IMR-90 (cell line): ENCODE measurements at regions of chr15 and their contacts with region 1.

Region 1: GRCh38 chr15:29917600-29918597 is 95.6 kb upstream of the TJP1 start:
- DNase-seq: peak; percentile 85
- ATAC-seq: peak; percentile 80
- H3K4me3 ChIP-seq: no peak overlapping the region
- H3K27ac ChIP-seq: peak overlapping the region; percentile 34; the same call in 1 of the 2 replicates
- H3K4me1 ChIP-seq: peaks cover 20% of the 10 kb centered on the region
- H3K27me3 ChIP-seq: peaks cover 3% of the 10 kb centered on the region; the same call in 1 of the 2 replicates
- CTCF ChIP-seq: no peak
- POLR2A ChIP-seq: no peak
- RAD21 ChIP-seq: no peak

Region 2: DNA sequence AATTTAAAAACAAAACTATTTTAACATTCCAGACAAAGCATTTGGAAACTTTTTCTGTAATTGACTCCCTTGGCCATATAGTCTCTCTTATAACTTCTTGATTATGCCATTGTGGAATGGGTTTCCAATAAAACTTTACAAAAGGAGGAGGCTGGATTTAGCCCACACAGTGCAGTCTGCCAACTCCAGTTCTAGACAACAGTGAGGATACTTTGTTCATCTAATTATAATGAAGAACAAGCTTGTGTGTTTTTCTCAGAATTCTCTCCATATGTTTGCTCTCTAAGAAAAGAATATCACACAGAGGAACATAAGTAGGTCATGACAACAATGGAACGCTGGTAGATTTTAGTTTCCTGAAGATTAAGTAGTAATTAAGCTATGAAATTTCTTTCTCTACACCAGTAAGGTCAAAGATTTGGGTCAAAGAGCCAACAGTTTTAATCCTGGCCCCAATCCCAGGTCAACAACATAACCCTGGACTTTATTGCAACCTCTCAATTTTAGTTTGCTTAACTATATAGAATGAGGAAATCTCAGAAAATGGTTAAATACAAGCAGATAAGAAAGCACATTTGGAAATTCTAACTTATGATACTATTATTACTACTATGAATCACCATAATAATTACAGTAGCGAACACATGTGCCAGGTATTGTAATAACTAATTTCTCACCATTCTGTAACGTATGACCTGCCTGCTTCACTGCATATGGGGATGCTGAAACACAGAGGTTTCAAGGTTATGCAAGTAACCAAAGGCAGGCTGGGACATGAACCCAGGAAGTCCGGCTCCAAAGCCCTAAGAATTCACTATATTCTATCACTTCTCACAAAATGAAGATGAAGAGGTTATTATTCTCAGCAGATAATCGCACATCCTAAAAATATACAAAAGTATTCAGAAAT is 161.3 kb before region 1 on chr15:
- CTCF ChIA-PET with region 1: no interaction called
- POLR2A ChIA-PET with region 1: no interaction called
- dilution Hi-C with region 1: no loop called
- in situ Hi-C with region 1: no loop called
- intact Hi-C with region 1: no loop called
- DNase-seq: no peak
- ATAC-seq: no peak
- H3K4me3 ChIP-seq: no peak overlapping the region
- H3K27ac ChIP-seq: no peak overlapping the region
- H3K4me1 ChIP-seq: 0 out of 2 replicates have a peak, but pooled peaks cover 1% of the 10 kb centered on the region
- H3K27me3 ChIP-seq: no peaks in the 10 kb centered on the region
- CTCF ChIP-seq: no peak
- POLR2A ChIP-seq: no peak
- RAD21 ChIP-seq: no peak

Region 3: DNA sequence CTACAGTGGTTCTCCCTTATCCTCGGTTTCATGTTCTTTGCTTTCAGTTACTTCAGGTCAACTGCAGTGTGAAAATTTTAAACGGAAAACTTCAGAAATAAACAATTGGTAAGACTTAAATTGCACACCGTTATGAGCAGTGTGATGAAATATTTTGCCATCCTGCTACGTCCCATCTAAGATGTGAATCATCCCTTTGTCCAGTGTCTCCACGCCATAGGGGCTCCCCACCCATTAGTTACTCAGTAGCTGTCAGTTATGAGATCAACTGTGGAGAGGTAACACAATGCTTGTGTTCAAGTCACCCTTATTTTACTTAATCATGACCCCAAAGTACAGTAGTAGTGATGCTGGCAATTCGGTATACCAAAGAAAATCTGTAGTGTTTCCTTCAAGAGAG is 143.0 kb before region 1 on chr15:
- CTCF ChIA-PET with region 1: no interaction called
- POLR2A ChIA-PET with region 1: no interaction called
- dilution Hi-C with region 1: no loop called
- in situ Hi-C with region 1: no loop called
- intact Hi-C with region 1: no loop called
- DNase-seq: peak; percentile 86
- ATAC-seq: peak; percentile 42; the same call in 1 of the 2 replicates
- H3K4me3 ChIP-seq: no peak overlapping the region
- H3K27ac ChIP-seq: no peak overlapping the region
- H3K4me1 ChIP-seq: peaks cover 5% of the 10 kb centered on the region; the same call in 1 of the 2 replicates
- H3K27me3 ChIP-seq: no peaks in the 10 kb centered on the region
- CTCF ChIP-seq: no peak
- POLR2A ChIP-seq: no peak
- RAD21 ChIP-seq: no peak

Region 4: DNA sequence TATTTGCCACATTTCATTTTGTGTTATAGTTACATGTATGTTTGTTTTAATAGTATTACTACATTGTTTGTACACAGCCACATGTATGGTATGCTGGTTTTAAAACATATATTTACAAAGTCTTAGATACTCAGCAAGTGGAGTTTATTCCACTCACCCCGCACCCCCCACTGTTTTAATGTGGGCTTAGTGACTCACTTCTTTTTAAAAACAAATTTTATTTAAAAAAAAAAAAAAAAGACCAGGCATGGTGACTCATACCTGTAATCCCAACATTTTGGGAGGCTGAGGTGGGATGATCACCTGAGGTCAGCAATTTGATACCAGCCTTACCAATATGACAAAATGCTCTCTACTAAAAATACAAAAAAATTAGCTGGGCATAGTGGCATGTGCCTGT is 68.7 kb before region 1 on chr15:
- CTCF ChIA-PET with region 1: no interaction called
- POLR2A ChIA-PET with region 1: no interaction called
- dilution Hi-C with region 1: no loop called
- in situ Hi-C with region 1: loop called (anchors 5 kb)
- intact Hi-C with region 1: no loop called
- DNase-seq: peak; percentile 62
- ATAC-seq: peak; percentile 81
- H3K4me3 ChIP-seq: no peak overlapping the region
- H3K27ac ChIP-seq: no peak overlapping the region
- H3K4me1 ChIP-seq: peaks cover 6% of the 10 kb centered on the region
- H3K27me3 ChIP-seq: no peaks in the 10 kb centered on the region
- CTCF ChIP-seq: no peak
- POLR2A ChIP-seq: no peak
- RAD21 ChIP-seq: no peak